Gastrocnemius medialis (tissue), 4 donors: ENCODE measurements at regions of chr4 and their contacts with region 1.

Region 1: DNA sequence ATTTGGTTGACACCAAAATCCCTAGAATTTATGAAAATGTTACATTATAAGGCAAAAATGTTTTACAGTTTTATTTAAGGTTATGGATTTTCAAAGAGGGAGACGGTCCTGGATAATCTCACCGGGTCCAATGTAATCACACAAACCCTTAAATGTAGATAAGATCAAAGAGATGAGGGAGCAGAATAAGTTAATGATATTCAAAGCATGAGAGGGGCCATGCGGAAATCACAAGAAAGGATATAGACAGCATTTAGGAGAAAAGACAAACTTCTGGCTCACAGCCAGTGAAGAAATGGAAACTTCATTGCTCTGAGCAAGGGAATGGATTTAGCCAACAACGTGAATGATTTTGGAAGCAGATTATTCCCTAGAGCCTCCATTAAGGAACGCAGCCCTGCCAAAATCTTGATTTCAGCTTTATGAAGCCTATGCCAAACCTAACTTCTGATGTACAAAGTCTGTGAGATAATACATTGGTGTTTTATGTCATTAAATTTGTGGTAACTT is 684.4 kb upstream of the GNPDA2 start:
- DNase-seq: no peak
- ATAC-seq: no peak
- H3K4me3 ChIP-seq: no peak overlapping the region
- H3K27ac ChIP-seq: no peak overlapping the region
- H3K4me1 ChIP-seq: no peaks in the 10 kb centered on the region
- H3K27me3 ChIP-seq: no peaks in the 10 kb centered on the region
- CTCF ChIP-seq: no peak
- POLR2A ChIP-seq: no peak

Region 2: DNA sequence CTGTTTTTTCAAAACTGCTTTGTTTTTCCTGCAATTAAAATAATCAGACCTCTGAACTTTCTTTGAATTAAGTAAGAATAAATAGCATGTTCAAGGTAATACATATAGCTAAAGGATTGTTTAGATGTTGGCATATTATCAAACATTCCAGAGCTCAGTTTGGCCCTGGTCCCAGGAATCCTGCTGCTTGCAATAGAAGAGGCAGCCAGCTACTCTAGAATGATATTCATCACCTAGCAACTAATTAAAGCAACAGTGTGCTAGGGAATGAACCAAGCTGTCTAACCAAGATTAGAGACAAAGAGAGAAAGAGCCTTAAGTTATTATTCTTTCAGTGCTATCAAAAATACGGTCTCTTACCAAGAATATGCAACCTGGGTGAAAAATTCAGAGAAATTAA is 252.2 kb after region 1 on chr4:
- in situ Hi-C with region 1: no loop called
- intact Hi-C with region 1: no loop called
- DNase-seq: no peak
- ATAC-seq: no peak
- H3K4me3 ChIP-seq: no peak overlapping the region
- H3K27ac ChIP-seq: no peak overlapping the region
- H3K4me1 ChIP-seq: no peaks in the 10 kb centered on the region
- H3K27me3 ChIP-seq: no peaks in the 10 kb centered on the region
- CTCF ChIP-seq: no peak
- POLR2A ChIP-seq: no peak

Region 3: DNA sequence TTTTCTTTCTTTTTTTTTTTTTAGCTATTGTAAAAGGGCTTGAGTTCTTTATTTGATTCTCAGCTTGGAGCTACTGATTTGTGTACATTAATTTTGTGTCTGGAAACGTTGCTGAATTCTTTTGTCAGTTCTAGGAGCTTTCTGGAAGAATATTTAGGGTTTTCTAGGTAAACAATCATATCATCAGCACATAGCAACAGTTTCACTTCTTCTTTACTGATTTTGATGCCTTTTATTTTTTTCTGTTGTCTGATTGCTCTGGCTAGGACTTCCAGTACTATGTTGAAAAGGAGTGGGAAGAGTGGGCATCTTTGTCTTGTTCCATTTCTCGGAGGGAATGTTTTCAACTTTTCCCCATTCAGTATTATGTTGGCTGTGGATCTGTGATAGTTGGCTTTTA is 420.9 kb after region 1 on chr4:
- in situ Hi-C with region 1: no loop called
- intact Hi-C with region 1: loop called (anchors 10 kb)
- DNase-seq: no peak
- ATAC-seq: no peak
- H3K4me3 ChIP-seq: no peak overlapping the region
- H3K27ac ChIP-seq: no peak overlapping the region
- H3K4me1 ChIP-seq: no peaks in the 10 kb centered on the region
- H3K27me3 ChIP-seq: no peaks in the 10 kb centered on the region
- CTCF ChIP-seq: no peak
- POLR2A ChIP-seq: no peak